ENCODE measurements at regions of chr4 and their contacts with region 1.

Region 1: DNA sequence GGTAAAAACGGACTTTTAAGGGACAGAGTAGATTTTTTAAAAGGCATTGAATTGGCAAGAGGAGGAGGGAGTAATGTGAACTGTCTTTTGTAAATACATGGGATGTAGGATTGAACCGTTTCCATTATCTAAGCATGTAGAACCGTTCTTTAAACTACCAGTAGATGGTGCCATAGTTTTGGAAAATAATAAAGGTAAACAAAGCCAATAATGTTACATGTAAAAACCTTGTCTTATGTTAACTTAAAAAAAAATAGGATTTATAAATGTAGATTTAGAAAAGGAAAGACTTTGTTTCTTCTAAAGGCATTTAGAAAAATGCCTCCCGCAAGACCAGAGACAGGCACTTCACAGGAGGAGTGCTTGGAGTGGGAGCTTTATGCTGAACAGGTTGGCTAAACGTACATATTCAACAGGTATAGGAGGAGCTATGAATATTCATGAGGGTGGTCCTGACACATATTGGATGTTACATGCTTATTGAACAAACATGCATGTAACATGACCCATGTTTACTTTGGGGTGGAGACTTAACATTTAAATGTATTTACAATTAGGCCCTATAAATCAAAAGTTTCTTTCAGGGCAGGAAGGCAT is 45.5 kb upstream of the FAM241A start:
- DNase-seq: no peak
- H3K4me3 ChIP-seq: no peak overlapping the region
- H3K27ac ChIP-seq: no peak overlapping the region
- H3K4me1 ChIP-seq: no peaks in the 10 kb centered on the region
- H3K27me3 ChIP-seq: no peaks in the 10 kb centered on the region
- CTCF ChIP-seq: peak; percentile 65

Region 2: GRCh38 chr4:112234952-112235609 is 135.3 kb after region 1 on chr4:
- intact Hi-C with region 1: loop called (anchors 5 kb)
- DNase-seq: peak; percentile 81
- H3K4me3 ChIP-seq: no peak overlapping the region
- H3K27ac ChIP-seq: no peak overlapping the region
- H3K4me1 ChIP-seq: peaks cover 4% of the 10 kb centered on the region
- H3K27me3 ChIP-seq: no peaks in the 10 kb centered on the region
- CTCF ChIP-seq: peak; percentile 66

Region 3: DNA sequence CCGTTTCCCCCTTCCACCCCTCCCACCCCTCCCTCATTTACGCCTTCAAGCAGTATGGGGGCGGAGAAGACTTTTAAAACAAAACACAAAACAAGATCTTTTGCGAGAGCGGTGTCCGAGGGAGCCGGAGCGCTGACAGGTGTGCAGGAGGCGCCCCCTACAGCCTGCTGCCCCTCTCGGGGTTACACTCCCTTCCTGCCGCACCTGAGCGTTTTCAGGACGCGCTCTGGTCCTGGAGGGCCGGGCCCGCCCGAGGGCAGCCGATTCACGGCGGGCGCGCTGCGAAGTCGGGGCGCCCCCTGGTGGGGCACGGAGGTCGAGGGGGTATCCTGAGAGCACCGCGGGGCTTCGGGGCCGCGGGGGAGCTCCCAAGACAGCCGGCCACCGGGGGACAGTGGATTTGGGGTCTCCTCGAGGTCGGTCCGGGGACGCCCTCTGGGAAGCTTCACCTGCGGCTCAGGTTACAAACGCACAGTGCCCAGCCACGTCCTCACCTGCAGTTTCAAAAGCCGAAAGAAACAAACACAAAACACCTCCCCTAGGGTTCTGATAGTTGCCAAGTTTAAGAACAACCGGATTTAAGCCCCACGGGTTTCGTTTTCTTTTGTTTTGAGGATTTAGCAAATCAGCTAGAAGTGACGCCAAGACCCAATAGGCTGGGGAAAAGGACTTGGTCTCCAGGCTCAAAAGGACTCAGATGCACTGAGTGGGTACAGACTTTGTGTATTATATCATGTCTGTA is 424.1 kb after region 1 on chr4:
- intact Hi-C with region 1: loop called (anchors 10 kb)
- DNase-seq: peak; percentile 73
- H3K4me3 ChIP-seq: peak overlapping the region; percentile 27
- H3K27ac ChIP-seq: no peak overlapping the region
- H3K4me1 ChIP-seq: peaks cover 4% of the 10 kb centered on the region
- H3K27me3 ChIP-seq: peaks cover 46% of the 10 kb centered on the region
- CTCF ChIP-seq: peak; percentile 74